Activated naive CD4-positive, alpha-beta T cell treated with anti-CD3 and anti-CD28 coated beads for 36 hours (primary cell): ENCODE measurements at regions of chr3 and their contacts with region 1.

Region 1: DNA sequence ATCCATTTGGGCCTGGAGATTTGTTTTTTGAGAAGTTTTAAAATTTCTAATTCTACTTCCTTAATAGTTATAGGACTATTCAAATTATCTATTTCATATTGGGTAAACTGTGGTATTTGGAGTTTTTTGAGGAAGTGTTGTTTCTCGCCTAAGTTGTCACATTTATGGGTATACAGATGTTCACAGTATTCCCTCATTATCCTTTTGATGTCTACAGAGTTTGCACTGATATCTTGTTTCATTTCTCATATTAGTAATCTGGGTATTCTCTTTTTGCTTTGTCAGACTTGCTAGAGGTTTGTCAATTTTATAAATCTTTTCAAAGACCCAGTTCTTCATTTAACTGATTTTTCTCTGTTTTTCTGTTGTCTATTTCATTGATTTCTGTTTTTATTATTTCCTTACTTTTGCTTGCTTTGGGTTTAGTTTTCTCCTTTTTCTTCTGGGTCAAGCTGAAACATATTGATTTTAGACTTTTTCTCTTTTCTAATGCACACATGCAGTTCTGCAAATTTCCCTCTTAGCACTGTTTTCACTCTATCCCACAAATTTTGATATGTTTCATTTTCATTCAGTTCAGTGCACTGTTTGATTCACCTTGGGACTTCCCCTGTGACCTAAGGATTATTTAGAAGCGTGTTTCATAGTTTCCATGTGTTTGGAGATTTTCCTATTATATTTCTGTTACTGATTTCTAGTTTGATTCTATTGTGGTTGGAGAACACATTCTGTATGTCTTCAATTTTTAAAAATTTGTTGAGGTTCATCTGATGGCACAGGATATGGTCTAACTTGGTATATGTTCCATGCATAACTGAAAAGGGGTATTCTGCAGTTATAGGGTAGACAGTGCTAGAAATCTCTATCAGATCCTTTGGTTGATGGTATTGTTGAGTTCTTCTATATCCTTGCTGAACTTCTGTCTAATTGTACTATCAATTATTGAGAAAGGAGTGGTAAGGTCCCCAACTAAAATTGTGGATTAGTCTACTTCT is 79.6 kb downstream of the SUMF1 start:
- DNase-seq: no peak
- H3K4me3 Mint-ChIP-seq: no peak overlapping the region
- H3K27ac Mint-ChIP-seq: peak overlapping the region; percentile 39
- H3K4me1 Mint-ChIP-seq: peaks cover 26% of the 10 kb centered on the region
- H3K27me3 Mint-ChIP-seq: no peaks in the 10 kb centered on the region

Region 2: DNA sequence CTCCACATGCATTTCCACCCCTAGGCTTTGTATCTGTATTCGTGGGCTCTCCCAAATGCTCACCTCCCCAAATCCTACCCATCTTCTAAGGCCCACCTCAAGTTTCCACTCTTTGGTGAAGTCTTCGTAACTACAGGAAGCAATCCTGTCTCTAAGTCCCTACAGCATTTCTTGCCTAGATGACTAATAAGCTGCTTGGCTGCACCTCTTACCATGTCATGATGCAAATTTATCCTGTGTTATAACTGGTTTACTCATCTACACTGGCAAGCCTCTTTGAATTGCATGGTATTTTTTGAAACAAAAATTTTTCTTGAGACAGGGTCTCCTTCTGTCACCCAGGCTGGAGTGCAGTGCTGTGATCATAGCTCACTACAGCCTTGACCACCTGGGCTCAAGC is 11.0 kb before region 1 on chr3:
- CTCF ChIA-PET with region 1: no interaction called
- intact Hi-C with region 1: no loop called
- DNase-seq: no peak
- H3K4me3 Mint-ChIP-seq: no peak overlapping the region
- H3K27ac Mint-ChIP-seq: no peak overlapping the region
- H3K4me1 Mint-ChIP-seq: no peaks in the 10 kb centered on the region
- H3K27me3 Mint-ChIP-seq: no peaks in the 10 kb centered on the region

Region 3: GRCh38 chr3:4409415-4409814 is 21.9 kb after region 1 on chr3:
- CTCF ChIA-PET with region 1: interaction called, 3 read pairs
- intact Hi-C with region 1: loop called (anchors 1 kb)
- DNase-seq: peak; percentile 38
- H3K4me3 Mint-ChIP-seq: no peak overlapping the region
- H3K27ac Mint-ChIP-seq: no peak overlapping the region
- H3K4me1 Mint-ChIP-seq: peaks cover 24% of the 10 kb centered on the region
- H3K27me3 Mint-ChIP-seq: no peaks in the 10 kb centered on the region

Region 4: DNA sequence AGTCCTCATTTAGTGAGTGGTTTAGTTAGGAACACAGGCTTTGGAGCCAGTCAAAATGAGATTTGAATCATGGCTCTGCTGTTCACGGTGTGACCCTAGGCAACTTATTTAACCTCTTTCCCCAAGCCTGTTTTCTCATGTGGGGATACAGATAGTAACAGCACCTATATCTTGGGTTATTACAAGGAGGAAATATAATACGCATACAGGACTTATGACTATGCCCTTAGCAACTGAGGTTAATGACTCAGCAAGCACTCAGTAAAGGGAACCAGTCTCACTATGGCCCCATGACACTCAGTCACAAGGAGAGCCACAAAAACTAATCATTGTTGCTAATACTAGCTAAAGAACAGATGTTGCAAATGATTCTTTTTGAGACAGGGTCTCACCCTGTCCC is 33.6 kb after region 1 on chr3:
- CTCF ChIA-PET with region 1: no interaction called
- intact Hi-C with region 1: loop called (anchors 1 kb)
- DNase-seq: peak; percentile 39
- H3K4me3 Mint-ChIP-seq: no peak overlapping the region
- H3K27ac Mint-ChIP-seq: no peak overlapping the region
- H3K4me1 Mint-ChIP-seq: peaks cover 19% of the 10 kb centered on the region
- H3K27me3 Mint-ChIP-seq: no peaks in the 10 kb centered on the region

Region 5: GRCh38 chr3:4584456-4585249 is 197.1 kb after region 1 on chr3:
- CTCF ChIA-PET with region 1: interaction called, 3 read pairs
- intact Hi-C with region 1: loop called (anchors 1 kb)
- DNase-seq: peak; percentile 72
- H3K4me3 Mint-ChIP-seq: peak overlapping the region; percentile 70
- H3K27ac Mint-ChIP-seq: peak overlapping the region; percentile 83
- H3K4me1 Mint-ChIP-seq: peaks cover 61% of the 10 kb centered on the region
- H3K27me3 Mint-ChIP-seq: no peaks in the 10 kb centered on the region